AG04450 (cell line): ENCODE measurements at regions of chr1 and their contacts with region 1.

Region 1: DNA sequence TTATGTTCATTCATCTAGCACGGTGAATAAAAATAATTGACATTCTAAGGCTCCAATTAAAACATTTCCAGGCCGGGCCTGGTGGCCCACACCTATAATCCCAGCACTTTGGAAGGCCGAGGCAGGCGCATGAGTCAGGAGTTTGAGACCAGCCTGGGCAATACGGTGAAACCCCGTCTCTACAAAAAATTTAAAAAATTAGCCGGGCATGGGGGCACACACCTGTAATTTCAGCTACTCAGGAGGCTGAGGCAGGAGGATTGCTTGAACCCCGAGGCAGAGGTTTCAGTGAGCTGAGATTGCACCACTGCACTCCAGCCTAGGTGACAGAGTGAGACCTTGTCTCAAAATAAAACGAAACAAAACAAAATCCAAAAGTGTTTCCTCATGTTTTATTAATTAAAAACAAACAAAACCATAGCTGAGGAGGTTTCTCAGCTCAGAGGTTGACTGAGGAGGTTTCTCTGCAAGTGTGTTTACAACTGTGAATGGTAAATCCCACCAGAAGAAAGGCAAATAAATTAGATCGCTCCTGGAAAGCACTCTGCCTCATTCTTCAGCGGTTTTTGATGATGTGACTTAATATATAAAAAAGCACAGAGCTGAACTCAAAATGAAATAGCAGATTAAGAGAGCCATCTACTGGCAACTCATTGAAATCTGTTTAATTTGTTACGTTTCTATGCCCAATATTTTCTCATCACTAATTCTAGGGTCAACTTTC is 37.7 kb upstream of the ATG4C start:
- DNase-seq: no peak
- H3K4me3 ChIP-seq: peak overlapping the region; percentile 1; the same call in 1 of the 2 replicates
- H3K27ac ChIP-seq: no peak overlapping the region
- H3K27me3 ChIP-seq: no peaks in the 10 kb centered on the region
- CTCF ChIP-seq: peak; percentile 65

Region 2: GRCh38 chr1:62500210-62500609 is 246.0 kb before region 1 on chr1:
- CTCF ChIA-PET with region 1: interaction called, 22 read pairs
- POLR2A ChIA-PET with region 1: no interaction called
- DNase-seq: no peak
- H3K4me3 ChIP-seq: no peak overlapping the region
- H3K27ac ChIP-seq: no peak overlapping the region
- H3K27me3 ChIP-seq: no peaks in the 10 kb centered on the region
- CTCF ChIP-seq: no peak

Region 3: GRCh38 chr1:62514746-62515423 is 231.4 kb before region 1 on chr1:
- CTCF ChIA-PET with region 1: interaction called, 137 read pairs
- POLR2A ChIA-PET with region 1: no interaction called
- DNase-seq: no peak
- H3K4me3 ChIP-seq: no peak overlapping the region
- H3K27ac ChIP-seq: no peak overlapping the region
- H3K27me3 ChIP-seq: no peaks in the 10 kb centered on the region
- CTCF ChIP-seq: no peak

Region 4: DNA sequence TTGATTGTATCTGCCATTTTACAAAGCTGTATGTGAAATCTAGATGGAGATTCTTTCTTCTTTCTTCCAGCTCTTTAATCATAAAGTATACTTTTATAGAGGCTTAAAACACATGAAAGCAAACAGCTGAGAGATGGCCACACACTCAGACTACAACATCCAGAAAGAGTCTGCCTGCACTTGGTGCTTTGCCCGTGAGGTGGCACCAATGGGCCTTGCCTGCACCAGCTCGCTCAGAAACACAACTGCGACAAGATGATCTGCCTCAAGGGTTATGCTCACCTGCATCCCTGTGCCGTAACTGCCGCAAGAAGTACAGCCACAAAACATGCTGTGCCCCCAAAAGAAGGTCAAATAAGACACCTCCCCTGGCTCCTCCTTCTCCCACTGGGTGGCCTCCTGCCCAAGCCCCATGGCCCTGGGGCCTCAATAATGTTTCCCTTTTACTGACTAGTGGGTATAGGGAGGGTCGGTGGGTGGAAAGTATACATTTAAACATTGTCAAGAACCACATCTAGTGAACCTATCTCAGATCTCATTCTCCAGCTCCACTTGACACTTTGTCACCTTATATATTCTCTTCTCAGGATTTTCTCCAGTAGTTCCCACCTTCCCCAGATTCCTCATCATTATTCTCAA is 215.6 kb before region 1 on chr1:
- CTCF ChIA-PET with region 1: interaction called, 166 read pairs
- POLR2A ChIA-PET with region 1: interaction called, 3 read pairs
- DNase-seq: peak; percentile 6
- H3K4me3 ChIP-seq: no peak overlapping the region
- H3K27ac ChIP-seq: no peak overlapping the region
- H3K27me3 ChIP-seq: no peaks in the 10 kb centered on the region
- CTCF ChIP-seq: peak; percentile 77

Region 5: GRCh38 chr1:62572476-62572875 is 173.8 kb before region 1 on chr1:
- CTCF ChIA-PET with region 1: no interaction called
- POLR2A ChIA-PET with region 1: no interaction called
- DNase-seq: no peak
- H3K4me3 ChIP-seq: no peak overlapping the region
- H3K27ac ChIP-seq: no peak overlapping the region
- H3K27me3 ChIP-seq: no peaks in the 10 kb centered on the region
- CTCF ChIP-seq: no peak

Region 6: GRCh38 chr1:62687903-62688686 is 58.2 kb before region 1 on chr1 and contains the start of gene DOCK7:
- CTCF ChIA-PET with region 1: interaction called, 23 read pairs
- POLR2A ChIA-PET with region 1: no interaction called
- DNase-seq: no peak
- H3K4me3 ChIP-seq: peak within 1 kb of the TSS; percentile 84
- H3K27ac ChIP-seq: peak within 1 kb of the TSS; percentile 61
- H3K27me3 ChIP-seq: no peaks in the 10 kb centered on the region
- CTCF ChIP-seq: no peak
- polyA plus RNA-seq, gene DOCK7: 79.6 and 111 TPM in 2 replicates

Region 7: GRCh38 chr1:62735491-62736171 is 10.6 kb before region 1 on chr1:
- CTCF ChIA-PET with region 1: interaction called, 13 read pairs
- POLR2A ChIA-PET with region 1: no interaction called
- DNase-seq: peak; percentile 27
- H3K4me3 ChIP-seq: no peak overlapping the region
- H3K27ac ChIP-seq: no peak overlapping the region
- H3K27me3 ChIP-seq: no peaks in the 10 kb centered on the region
- CTCF ChIP-seq: no peak